Lower leg skin (tissue), 4 donors: ENCODE measurements at regions of chr9 and their contacts with region 1.

Region 1: DNA sequence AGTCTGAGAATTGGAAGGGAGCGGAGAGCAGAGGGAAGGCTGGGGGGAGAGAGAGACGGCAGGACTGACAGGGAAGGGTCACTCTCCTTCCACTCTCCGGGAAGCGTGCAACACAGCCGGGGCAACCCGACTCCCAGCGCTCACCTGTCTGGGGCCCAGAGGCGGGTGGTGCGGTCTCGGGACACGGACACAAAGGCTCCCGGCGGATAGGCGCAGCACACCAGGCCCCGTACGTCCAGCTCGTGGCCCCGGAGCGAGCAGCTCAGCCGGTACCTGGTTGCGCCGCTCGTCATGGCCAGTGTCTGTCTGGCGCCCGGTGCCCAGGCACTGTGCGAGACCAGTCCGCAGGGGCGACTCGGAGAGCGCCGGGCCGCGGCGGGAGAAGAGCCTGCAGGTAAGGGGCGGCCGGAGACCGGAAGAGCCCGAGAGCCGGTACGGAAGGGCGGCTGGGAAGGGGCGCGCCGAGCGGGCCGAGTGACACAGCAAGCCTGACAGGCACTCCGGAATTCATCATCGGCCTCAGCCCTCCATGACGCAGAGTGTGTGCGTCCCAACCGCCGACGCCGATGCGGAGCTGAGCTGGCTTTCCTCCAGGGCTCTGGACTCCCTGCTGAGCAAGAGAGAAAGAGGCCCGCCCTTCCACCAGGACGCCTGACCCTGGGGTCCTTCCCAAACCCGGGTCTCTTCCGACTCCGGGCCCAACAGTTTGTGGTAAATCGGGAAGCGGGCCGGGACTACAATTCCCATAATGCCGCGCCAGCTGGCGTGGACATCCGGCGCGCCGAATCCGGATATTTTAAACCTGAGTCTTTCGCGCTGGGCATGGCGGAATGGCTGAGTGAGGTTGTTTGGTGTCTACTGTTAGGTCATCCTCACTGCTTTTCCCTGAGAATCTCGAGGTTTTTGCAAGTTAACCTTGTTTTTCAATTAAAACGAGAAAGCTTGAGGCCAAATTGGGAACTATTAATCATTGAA is at the start of gene PLAA:
- DNase-seq: peak; percentile 85 to 97
- H3K4me3 ChIP-seq: peak within 1 kb of the TSS; percentile 93
- CTCF ChIP-seq: no peak
- POLR2A ChIP-seq: no peak
- total RNA-seq, gene PLAA: 26.3 to 34.6 (median 29.3) TPM

Region 2: DNA sequence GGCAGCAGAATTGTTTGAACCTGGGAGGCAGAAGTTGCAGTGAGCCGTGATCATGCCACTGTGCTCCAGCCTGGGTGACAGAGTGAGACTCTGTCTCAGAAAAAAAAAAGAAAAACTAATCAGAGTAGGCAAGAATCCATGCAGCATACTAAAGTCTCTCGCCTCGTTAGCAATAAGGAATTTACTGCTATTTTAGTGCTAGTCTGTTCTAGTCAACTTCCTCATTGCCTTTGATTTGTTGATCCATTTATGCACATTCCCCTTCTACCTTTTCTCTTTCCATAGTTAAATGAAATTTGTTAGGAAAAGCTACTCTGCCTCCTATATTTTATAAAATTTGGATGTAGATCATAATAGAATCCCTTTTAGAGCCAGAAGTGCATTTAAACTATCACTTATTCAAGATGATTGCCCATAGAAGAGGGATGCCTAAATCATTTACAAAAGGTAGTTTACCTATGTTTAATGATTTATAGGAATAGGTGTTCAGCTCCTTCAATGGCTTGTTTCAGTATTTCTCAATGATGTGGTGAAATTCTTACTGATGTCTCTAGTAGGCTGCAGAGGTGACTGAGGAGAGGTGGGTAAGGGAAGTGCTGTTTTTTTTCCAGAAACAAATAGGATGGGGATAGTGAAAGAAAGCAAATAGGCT is 56.5 kb after region 1 on chr9:
- intact Hi-C with region 1: no loop called
- DNase-seq: no peak
- H3K4me3 ChIP-seq: no peak overlapping the region
- CTCF ChIP-seq: no peak
- POLR2A ChIP-seq: no peak

Region 3: GRCh38 chr9:27573634-27574590 is 626.9 kb after region 1 on chr9:
- intact Hi-C with region 1: loop called (anchors 10 kb)
- DNase-seq: peak; percentile 99 to 100
- H3K4me3 ChIP-seq: peak overlapping the region; percentile 24
- CTCF ChIP-seq: no peak
- POLR2A ChIP-seq: peak in 1 of 2 donors; percentile 21